ENCODE measurements at regions of chr4 and their contacts with region 1.

Region 1: DNA sequence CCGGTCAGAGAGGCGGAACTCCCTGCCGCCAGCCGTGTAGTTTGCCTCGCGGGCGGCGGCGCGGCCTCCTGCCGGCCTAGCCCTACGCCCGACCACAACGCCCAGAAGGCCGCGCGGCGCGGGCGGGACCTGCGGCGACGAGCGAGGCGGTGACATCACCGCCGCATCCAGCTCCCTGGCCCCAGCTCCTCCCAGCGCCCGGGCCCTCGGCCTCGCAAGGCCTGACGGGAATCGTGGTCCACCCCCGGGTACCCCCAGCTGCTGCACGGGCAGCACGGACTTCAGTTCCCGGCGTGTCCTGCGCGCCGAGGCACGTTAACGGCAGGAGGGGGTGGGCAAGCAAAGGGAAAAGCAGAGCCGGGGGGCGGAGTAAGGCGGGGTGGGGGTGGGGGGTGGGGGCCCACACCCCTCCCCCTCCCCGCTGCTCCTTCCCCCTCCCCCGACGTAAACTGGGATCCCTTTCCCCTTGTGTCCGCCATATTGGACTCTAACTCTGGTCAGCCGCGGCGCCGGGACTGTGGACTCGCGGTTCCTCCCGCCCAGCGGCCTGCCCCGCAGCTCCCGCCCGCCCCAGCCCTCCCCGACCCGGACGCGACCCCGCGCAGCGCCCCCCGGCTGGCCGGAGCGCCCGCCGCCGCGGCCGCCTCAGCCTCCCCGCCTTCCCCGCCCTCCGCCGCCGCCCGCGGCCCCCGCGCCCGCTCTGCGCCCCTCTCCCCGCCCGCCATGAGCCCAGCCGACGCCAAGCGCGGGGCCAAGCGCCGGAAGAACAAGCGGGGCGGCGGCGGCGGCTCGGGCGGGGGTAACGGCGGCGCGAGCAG is at the start of gene FAM193A:
- DNase-seq: peak; percentile 93 to 99 (median 99)
- ATAC-seq: peak; percentile 96
- H3K4me3 ChIP-seq: peak within 1 kb of the TSS; percentile 58
- H3K4me3 Mint-ChIP-seq: peak within 1 kb of the TSS; percentile 87 to 95 (median 92)
- H3K27ac ChIP-seq: peak within 1 kb of the TSS; percentile 92
- H3K27ac Mint-ChIP-seq: peak within 1 kb of the TSS; percentile 86 to 98 (median 92)
- H3K4me1 ChIP-seq: peaks cover 11 to 15% of the 10 kb centered on the region in 2 donors
- H3K4me1 Mint-ChIP-seq: peaks cover 5 to 36% (median 19%) of the 10 kb centered on the region in 7 donors
- H3K27me3 ChIP-seq: no peaks in the 10 kb centered on the region
- H3K27me3 Mint-ChIP-seq: no peaks in the 10 kb centered on the region
- total RNA-seq, gene FAM193A: 32.8 to 47.2 (median 44.1) TPM

Region 2: DNA sequence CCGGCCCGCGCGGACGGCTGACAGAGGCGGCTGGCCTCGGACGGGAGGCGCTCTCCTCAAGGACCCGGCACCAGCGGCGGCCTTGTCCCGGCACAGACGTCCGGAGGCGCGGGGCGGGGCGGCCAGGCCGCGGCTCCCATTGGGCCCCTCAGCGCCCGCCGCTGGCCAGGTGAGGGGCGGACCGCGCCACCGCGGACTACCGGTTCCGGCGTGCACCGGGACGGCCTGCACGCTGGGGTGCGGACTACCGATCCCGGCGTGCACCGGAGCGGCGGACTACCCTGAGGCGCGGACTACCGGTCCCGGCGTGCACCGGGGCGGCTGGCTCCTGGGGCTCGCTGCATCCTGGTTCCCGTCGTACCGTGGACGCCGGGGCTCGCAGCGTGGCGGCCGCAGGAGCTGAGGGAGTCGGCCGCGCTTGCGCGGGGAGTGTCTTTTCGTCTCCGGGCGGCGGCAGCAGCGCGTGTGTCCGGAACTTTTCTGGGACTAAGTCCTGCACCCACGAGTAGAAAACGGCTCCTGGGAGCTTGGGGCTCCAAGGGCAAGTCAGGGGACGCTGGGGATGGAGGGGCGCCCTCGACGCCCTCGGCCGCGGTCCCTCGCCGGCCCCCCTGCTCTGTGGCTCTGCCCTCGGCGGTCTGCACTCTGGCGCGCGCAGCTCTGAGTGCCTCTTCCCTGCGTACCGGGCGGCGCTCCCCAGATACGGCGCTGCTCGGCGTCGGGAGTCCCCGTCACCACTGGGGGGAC is 680.2 kb before region 1 on chr4 and contains the start of gene LETM1:
- CTCF ChIA-PET with region 1: no interaction called
- POLR2A ChIA-PET with region 1: no interaction called
- intact Hi-C with region 1: loop called in 1 of 2 experiments (anchors 1 kb)
- DNase-seq: peak; percentile 79 to 96 (median 88)
- ATAC-seq: peak; percentile 98
- H3K4me3 ChIP-seq: peak within 1 kb of the TSS; percentile 86
- H3K4me3 Mint-ChIP-seq: peak within 1 kb of the TSS; percentile 67 to 88 (median 83)
- H3K27ac ChIP-seq: peak within 1 kb of the TSS; percentile 70
- H3K27ac Mint-ChIP-seq: peak within 1 kb of the TSS in 8 of 9 donors; percentile 17 to 80 (median 48)
- H3K4me1 ChIP-seq: peaks cover 10 to 14% of the 10 kb centered on the region in 2 donors
- H3K4me1 Mint-ChIP-seq: peaks cover 31 to 45% (median 41%) of the 10 kb centered on the region in 7 donors
- H3K27me3 ChIP-seq: no peaks in the 10 kb centered on the region
- H3K27me3 Mint-ChIP-seq: no peaks in the 10 kb centered on the region
- total RNA-seq, gene LETM1: 29.5 to 56.4 (median 36.0) TPM

Region 3: GRCh38 chr4:2220016-2220630 is 316.3 kb before region 1 on chr4:
- CTCF ChIA-PET with region 1: no interaction called
- POLR2A ChIA-PET with region 1: no interaction called
- intact Hi-C with region 1: loop called in 1 of 2 experiments (anchors 1 kb)
- DNase-seq: peak; percentile 61 to 84 (median 76)
- ATAC-seq: peak; percentile 96
- H3K4me3 ChIP-seq: no peak overlapping the region
- H3K4me3 Mint-ChIP-seq: no peak overlapping the region
- H3K27ac ChIP-seq: no peak overlapping the region
- H3K27ac Mint-ChIP-seq: peak overlapping the region in 2 of 9 donors; percentile 6 to 29
- H3K4me1 ChIP-seq: peaks cover 0 to 7% of the 10 kb centered on the region in 2 donors
- H3K4me1 Mint-ChIP-seq: peaks cover 0 to 17% (median 6%) of the 10 kb centered on the region in 7 donors
- H3K27me3 ChIP-seq: no peaks in the 10 kb centered on the region
- H3K27me3 Mint-ChIP-seq: no peaks in the 10 kb centered on the region

Region 4: GRCh38 chr4:2281575-2282343 is 254.6 kb before region 1 on chr4:
- CTCF ChIA-PET with region 1: no interaction called
- POLR2A ChIA-PET with region 1: interaction called, 3 read pairs
- intact Hi-C with region 1: loop called in 1 of 2 experiments (anchors 5 kb)
- DNase-seq: peak; percentile 51 to 96 (median 94)
- ATAC-seq: peak; percentile 95
- H3K4me3 ChIP-seq: peak overlapping the region; percentile 33
- H3K4me3 Mint-ChIP-seq: peak overlapping the region; percentile 73 to 90 (median 84)
- H3K27ac ChIP-seq: peak overlapping the region; percentile 81
- H3K27ac Mint-ChIP-seq: peak overlapping the region; percentile 91 to 100 (median 99)
- H3K4me1 ChIP-seq: peaks cover 31 to 34% of the 10 kb centered on the region in 2 donors
- H3K4me1 Mint-ChIP-seq: peaks cover 27 to 64% (median 50%) of the 10 kb centered on the region in 7 donors
- H3K27me3 ChIP-seq: no peaks in the 10 kb centered on the region
- H3K27me3 Mint-ChIP-seq: no peaks in the 10 kb centered on the region

Region 5: DNA sequence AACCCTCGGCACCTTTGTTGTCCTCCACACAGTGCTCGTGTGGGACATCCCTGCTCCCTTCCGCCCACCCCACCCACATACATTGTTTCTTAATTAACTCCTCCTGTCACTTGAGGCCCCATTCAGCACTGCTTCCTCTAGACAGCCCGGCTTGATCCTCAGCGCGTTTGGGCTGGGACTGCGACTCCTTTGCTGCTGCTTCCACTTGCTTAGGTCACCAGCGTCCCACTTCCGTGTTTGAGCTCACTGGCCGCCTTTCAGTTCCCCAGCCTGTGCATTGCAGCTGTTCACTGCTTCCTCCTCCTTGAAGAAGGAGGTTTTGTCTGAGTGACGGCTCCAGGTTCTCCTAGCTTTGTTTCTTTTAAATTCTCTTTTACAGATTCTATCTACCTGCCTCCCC is 51.4 kb before region 1 on chr4:
- CTCF ChIA-PET with region 1: no interaction called
- POLR2A ChIA-PET with region 1: interaction called, 10 read pairs
- intact Hi-C with region 1: loop called in 1 of 2 experiments (anchors 5 kb)
- DNase-seq: peak; percentile 41 to 74 (median 67)
- ATAC-seq: peak; percentile 92
- H3K4me3 ChIP-seq: peak overlapping the region; percentile 43
- H3K4me3 Mint-ChIP-seq: peak overlapping the region; percentile 77 to 91 (median 86)
- H3K27ac ChIP-seq: peak overlapping the region; percentile 55
- H3K27ac Mint-ChIP-seq: peak overlapping the region; percentile 54 to 91 (median 82)
- H3K4me1 ChIP-seq: peaks cover 64 to 68% of the 10 kb centered on the region in 2 donors
- H3K4me1 Mint-ChIP-seq: peaks cover 65 to 88% (median 80%) of the 10 kb centered on the region in 7 donors
- H3K27me3 ChIP-seq: no peaks in the 10 kb centered on the region
- H3K27me3 Mint-ChIP-seq: no peaks in the 10 kb centered on the region

Region 6: DNA sequence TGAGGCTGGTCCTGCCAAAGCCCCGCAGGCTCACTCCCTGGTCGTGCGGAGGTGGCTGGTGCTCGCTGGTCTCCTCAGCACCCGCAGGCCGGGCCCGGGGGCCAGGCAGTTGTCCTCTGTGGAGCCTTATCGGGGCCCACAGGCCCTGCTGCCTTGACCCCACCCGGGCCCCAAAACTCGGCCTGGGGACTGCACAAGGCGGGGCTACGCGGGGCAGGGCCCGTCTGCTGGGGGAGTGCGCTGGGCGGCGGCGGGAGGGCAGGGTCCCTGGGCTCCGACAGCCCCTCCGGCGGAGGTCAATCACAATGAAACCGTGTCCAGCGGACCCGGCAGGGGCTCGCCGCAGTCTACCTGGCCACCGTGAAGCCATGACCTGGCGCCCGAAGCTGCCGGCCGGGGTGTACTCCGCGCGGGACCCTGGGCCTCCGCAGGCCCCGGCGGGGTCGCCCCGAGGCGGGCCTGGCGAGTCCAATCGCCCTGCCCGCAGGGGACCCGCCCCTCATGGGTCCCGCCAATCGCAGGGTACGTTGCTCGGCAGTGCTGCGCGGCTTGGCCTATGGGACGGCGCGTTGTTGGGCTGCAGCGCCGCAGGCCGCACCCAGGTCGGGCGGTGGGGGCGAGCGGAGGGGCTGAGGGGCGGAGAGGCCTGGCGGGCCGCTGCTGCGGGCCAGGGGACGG is 307.0 kb after region 1 on chr4 and contains the start of gene ADD1:
- CTCF ChIA-PET with region 1: no interaction called
- POLR2A ChIA-PET with region 1: no interaction called
- intact Hi-C with region 1: loop called in 1 of 2 experiments (anchors 5 kb)
- DNase-seq: peak; percentile 84 to 100 (median 94)
- ATAC-seq: peak; percentile 98
- H3K4me3 ChIP-seq: peak within 1 kb of the TSS; percentile 80
- H3K4me3 Mint-ChIP-seq: peak within 1 kb of the TSS; percentile 87 to 100 (median 92)
- H3K27ac ChIP-seq: peak within 1 kb of the TSS; percentile 95
- H3K27ac Mint-ChIP-seq: peak within 1 kb of the TSS; percentile 85 to 97 (median 93)
- H3K4me1 ChIP-seq: peaks cover 33 to 40% of the 10 kb centered on the region in 2 donors
- H3K4me1 Mint-ChIP-seq: peaks cover 39 to 75% (median 59%) of the 10 kb centered on the region in 7 donors
- H3K27me3 ChIP-seq: no peaks in the 10 kb centered on the region
- H3K27me3 Mint-ChIP-seq: no peaks in the 10 kb centered on the region
- total RNA-seq, gene ADD1: 211 to 300 (median 282) TPM

Measured in naive thymus-derived CD4-positive, alpha-beta T cell (primary cell).